Activated B cell treated with CpG ODN at 0.5 μM for 24 hours (primary cell): ENCODE measurements at regions of chr7 and their contacts with region 1.

Region 1: GRCh38 chr7:22559829-22560489 is 60.0 kb upstream of the STEAP1B start:
- DNase-seq: peak; percentile 43
- ATAC-seq: peak; percentile 80
- H3K4me3 Mint-ChIP-seq: peak overlapping the region; percentile 36
- H3K27ac Mint-ChIP-seq: peak overlapping the region; percentile 70
- H3K4me1 Mint-ChIP-seq: peaks cover 50% of the 10 kb centered on the region
- H3K27me3 Mint-ChIP-seq: no peaks in the 10 kb centered on the region
- CTCF ChIP-seq: peak; percentile 24

Region 2: DNA sequence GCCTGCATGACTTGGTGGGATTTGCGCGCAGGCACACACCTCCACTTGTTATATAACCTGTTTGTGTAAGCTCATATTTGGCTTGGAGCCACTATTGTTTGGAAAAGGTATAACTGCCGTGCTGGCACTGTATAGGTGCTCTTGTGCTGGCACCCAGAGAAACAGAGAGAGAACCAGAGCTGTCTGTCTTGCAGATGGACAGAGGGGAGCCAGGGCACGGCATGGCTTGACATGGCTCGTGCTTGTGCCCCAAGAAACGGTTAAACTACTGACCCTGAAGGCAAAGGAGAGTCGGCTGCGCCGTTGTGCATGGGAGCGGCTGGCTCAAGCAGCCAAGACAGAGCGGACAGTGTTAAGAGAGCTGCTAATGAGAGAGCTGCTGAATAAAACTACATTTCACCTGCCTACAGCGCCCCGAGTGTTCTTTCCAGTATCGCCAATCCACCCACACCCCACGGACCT is 226.2 kb before region 1 on chr7:
- CTCF ChIA-PET with region 1: no interaction called
- POLR2A ChIA-PET with region 1: no interaction called
- intact Hi-C with region 1: no loop called
- DNase-seq: no peak
- ATAC-seq: no peak
- H3K4me3 Mint-ChIP-seq: no peak overlapping the region
- H3K27ac Mint-ChIP-seq: no peak overlapping the region
- H3K4me1 Mint-ChIP-seq: peaks cover 3% of the 10 kb centered on the region
- H3K27me3 Mint-ChIP-seq: no peaks in the 10 kb centered on the region
- CTCF ChIP-seq: no peak

Region 3: GRCh38 chr7:22460360-22460983 is 99.5 kb before region 1 on chr7:
- CTCF ChIA-PET with region 1: no interaction called
- POLR2A ChIA-PET with region 1: no interaction called
- intact Hi-C with region 1: no loop called
- DNase-seq: no peak
- ATAC-seq: no peak
- H3K4me3 Mint-ChIP-seq: no peak overlapping the region
- H3K27ac Mint-ChIP-seq: no peak overlapping the region
- H3K4me1 Mint-ChIP-seq: no peaks in the 10 kb centered on the region
- H3K27me3 Mint-ChIP-seq: no peaks in the 10 kb centered on the region
- CTCF ChIP-seq: no peak

Region 4: GRCh38 chr7:22732556-22733126 is 172.7 kb after region 1 on chr7:
- CTCF ChIA-PET with region 1: interaction called, 348 read pairs
- POLR2A ChIA-PET with region 1: interaction called, 180 read pairs
- intact Hi-C with region 1: no loop called
- DNase-seq: no peak
- ATAC-seq: peak; percentile 61
- H3K4me3 Mint-ChIP-seq: no peak overlapping the region
- H3K27ac Mint-ChIP-seq: no peak overlapping the region
- H3K4me1 Mint-ChIP-seq: peaks cover 40% of the 10 kb centered on the region
- H3K27me3 Mint-ChIP-seq: no peaks in the 10 kb centered on the region
- CTCF ChIP-seq: no peak

Region 5: GRCh38 chr7:22782616-22783232 is 222.8 kb after region 1 on chr7:
- CTCF ChIA-PET with region 1: interaction called, 94 read pairs
- POLR2A ChIA-PET with region 1: interaction called, 5 read pairs
- intact Hi-C with region 1: loop called (anchors 1 kb)
- DNase-seq: peak; percentile 65
- ATAC-seq: peak; percentile 99
- H3K4me3 Mint-ChIP-seq: no peak overlapping the region
- H3K27ac Mint-ChIP-seq: no peak overlapping the region
- H3K4me1 Mint-ChIP-seq: no peaks in the 10 kb centered on the region
- H3K27me3 Mint-ChIP-seq: no peaks in the 10 kb centered on the region
- CTCF ChIP-seq: no peak

Region 6: DNA sequence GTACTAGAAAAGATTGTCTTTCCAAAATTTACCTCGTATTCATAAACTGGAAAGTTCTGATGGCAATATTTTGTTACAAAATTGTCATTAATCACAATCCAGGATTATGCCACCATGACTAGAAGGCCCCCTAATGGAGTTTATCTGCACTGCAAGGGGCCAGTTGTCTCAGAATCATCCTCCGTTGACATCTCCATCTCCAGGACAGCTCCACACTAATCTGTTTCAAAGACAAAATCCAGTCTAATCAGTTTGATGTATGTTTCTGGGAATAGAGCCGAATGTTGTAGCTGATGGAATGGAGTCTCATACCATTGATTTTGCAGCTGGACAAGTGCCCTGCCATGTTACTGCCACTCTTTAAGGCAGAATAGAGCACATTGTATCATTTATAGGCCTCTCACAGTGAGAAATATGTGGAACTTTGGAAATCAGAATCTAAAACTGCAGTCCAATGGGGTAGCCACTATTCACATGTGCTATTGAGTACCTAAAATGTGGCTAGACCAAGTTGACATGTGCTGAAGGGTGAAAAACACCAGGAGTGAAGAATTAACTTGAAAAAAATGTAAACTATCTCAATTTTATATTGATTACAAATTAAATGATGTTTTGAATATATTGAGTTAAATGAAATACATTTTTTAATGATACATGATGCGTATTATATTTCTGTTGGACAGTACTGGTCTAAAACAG is 301.0 kb after region 1 on chr7:
- CTCF ChIA-PET with region 1: interaction called, 3 read pairs
- POLR2A ChIA-PET with region 1: interaction called, 5 read pairs
- intact Hi-C with region 1: loop called (anchors 1 kb)
- DNase-seq: no peak
- ATAC-seq: peak; percentile 64
- H3K4me3 Mint-ChIP-seq: no peak overlapping the region
- H3K27ac Mint-ChIP-seq: no peak overlapping the region
- H3K4me1 Mint-ChIP-seq: peaks cover 63% of the 10 kb centered on the region
- H3K27me3 Mint-ChIP-seq: no peaks in the 10 kb centered on the region
- CTCF ChIP-seq: no peak